Upper lobe of right lung (tissue), 1 donor: ENCODE measurements at regions of chr1 and their contacts with region 1.

Region 1: DNA sequence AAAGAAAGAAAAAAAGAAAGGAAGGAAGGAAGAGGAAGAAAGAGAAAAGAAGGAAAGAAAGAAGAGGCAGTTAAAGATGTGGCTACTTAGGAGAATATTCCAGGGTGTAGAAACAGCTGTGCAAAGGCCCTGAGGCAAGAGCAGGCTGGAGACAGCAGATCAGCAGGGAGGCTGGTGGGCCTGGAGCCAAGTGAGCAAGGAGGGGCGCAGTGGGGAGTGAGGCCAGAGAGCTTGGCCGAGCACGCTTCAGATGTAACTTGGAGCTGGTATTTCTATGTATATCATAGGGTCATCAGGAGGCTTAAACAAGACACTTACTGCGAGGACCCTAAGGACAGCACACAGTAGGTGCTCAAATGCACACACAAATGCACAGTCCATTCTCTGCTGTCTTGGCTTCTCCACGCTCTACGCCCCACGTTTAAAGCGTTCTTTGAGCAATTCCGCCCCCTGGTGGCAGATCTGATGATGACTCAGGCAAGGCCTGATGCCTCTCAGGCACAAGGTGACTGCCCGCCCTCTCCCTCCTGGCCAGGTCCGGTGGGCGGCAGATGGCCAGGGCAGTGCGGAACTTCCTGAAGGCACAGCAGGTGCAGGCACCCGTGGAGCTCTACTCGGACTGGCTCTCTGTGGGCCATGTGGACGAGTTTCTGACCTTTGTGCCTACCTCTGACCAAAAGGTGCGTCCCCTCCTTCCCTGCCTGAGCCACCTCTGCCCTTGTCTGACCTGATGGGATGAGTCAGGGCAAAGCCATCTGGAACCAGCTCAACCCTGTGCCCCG is 11.9 kb upstream of the PADI3 start:
- DNase-seq: peak; percentile 90
- ATAC-seq: peak; percentile 84
- H3K4me3 ChIP-seq: no peak overlapping the region
- H3K27ac ChIP-seq: no peak overlapping the region
- H3K4me1 ChIP-seq: no peaks in the 10 kb centered on the region
- H3K27me3 ChIP-seq: no peaks in the 10 kb centered on the region
- CTCF ChIP-seq: peak; percentile 93

Region 2: GRCh38 chr1:17125756-17126237 is 111.2 kb before region 1 on chr1:
- intact Hi-C with region 1: loop called (anchors 2 kb)
- DNase-seq: peak; percentile 94
- ATAC-seq: peak; percentile 94
- H3K4me3 ChIP-seq: no peak overlapping the region
- H3K27ac ChIP-seq: no peak overlapping the region
- H3K4me1 ChIP-seq: peaks cover 24% of the 10 kb centered on the region
- H3K27me3 ChIP-seq: no peaks in the 10 kb centered on the region
- CTCF ChIP-seq: peak; percentile 95

Region 3: GRCh38 chr1:17274186-17275170 is 37.5 kb after region 1 on chr1:
- intact Hi-C with region 1: no loop called
- DNase-seq: peak; percentile 82
- ATAC-seq: peak; percentile 83
- H3K4me3 ChIP-seq: no peak overlapping the region
- H3K27ac ChIP-seq: no peak overlapping the region
- H3K4me1 ChIP-seq: no peaks in the 10 kb centered on the region
- H3K27me3 ChIP-seq: peaks cover 11% of the 10 kb centered on the region
- CTCF ChIP-seq: peak; percentile 55

Region 4: GRCh38 chr1:17319561-17320350 is 82.8 kb after region 1 on chr1:
- intact Hi-C with region 1: no loop called
- DNase-seq: no peak
- ATAC-seq: no peak
- H3K4me3 ChIP-seq: no peak overlapping the region
- H3K27ac ChIP-seq: no peak overlapping the region
- H3K4me1 ChIP-seq: no peaks in the 10 kb centered on the region
- H3K27me3 ChIP-seq: no peaks in the 10 kb centered on the region
- CTCF ChIP-seq: no peak